ENCODE measurements at regions of chr7 and their contacts with region 1.

Region 1: GRCh38 chr7:139075031-139075652 is 34.4 kb downstream of the ZC3HAV1 start:
- DNase-seq: peak; percentile 84
- H3K4me3 ChIP-seq: peak overlapping the region in 1 of 2 experiments; percentile 2; a peak in 1 of 4 replicates
- H3K27ac ChIP-seq: peak overlapping the region; percentile 23 to 52; a peak in 2 of 4 replicates
- H3K4me1 ChIP-seq: peaks cover 0 to 3% of the 10 kb centered on the region in 2 experiments; a peak in 2 of 4 replicates
- H3K27me3 ChIP-seq: no peaks in the 10 kb centered on the region
- CTCF ChIP-seq: peak; percentile 99
- EP300 ChIP-seq: no peak
- RAD21 ChIP-seq: peak; percentile 97

Region 2: DNA sequence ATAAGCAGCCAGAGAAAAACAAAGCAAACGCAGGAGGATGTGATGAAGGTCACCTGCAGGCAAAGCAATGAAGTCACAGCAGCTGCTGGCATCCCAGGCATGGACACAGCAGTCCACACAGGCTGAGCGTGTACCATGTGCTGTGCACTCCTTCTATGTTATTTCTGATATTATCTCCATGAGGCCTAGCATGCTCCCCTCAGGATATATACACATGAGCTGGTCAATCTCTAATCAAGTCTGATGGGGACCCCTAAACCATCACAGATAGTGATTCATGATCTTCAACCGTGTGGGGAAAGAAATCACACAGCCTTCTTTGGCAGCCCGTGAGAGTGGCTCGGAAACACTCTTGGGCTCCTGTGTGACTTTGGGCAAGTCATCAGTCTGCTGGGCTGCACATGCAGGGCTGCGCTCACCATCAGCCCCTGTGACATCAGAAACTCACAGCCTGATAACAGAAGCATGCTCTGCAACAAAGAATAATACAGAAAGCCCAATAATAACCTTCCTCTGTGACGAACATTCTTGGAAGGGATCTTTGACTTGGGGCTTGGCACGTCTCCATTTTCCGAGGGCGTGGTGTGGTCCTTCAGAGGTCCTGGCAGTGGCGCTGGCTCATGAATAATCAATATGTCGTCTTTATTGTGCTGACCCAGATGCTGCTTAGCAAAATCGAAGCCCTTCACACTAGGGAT is 194.1 kb before region 1 on chr7:
- CTCF ChIA-PET with region 1: interaction called, 48 read pairs
- POLR2A ChIA-PET with region 1: no interaction called
- DNase-seq: peak; percentile 69
- H3K4me3 ChIP-seq: no peak overlapping the region
- H3K27ac ChIP-seq: no peak overlapping the region; a peak in 1 of 4 replicates
- H3K4me1 ChIP-seq: peaks cover 0 to 11% of the 10 kb centered on the region in 2 experiments; a peak in 2 of 4 replicates
- H3K27me3 ChIP-seq: no peaks in the 10 kb centered on the region
- CTCF ChIP-seq: no peak
- EP300 ChIP-seq: peak in 1 of 2 experiments; percentile 32; a peak in 1 of 4 replicates
- RAD21 ChIP-seq: no peak

Region 3: DNA sequence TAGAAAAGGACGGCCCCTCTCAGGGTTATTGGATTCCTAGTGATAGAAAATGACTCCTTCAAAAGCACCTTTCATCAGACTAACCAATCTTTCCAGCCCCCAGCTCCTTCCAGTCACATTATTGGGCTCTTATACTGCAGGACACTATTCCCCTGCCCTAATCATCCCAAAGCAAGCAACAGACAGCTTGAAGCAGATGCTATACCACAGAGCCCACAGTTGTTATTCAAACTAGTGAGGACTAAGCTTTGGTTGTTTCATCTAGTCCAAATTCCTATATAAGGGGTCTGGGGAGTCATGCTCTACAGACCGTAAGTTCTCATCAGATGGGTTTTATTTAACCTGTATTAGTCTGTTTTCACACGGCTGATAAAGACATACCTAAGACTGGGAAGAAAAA is 63.8 kb before region 1 on chr7:
- CTCF ChIA-PET with region 1: interaction called, 140 read pairs
- POLR2A ChIA-PET with region 1: no interaction called
- DNase-seq: no peak
- H3K4me3 ChIP-seq: no peak overlapping the region
- H3K27ac ChIP-seq: no peak overlapping the region
- H3K4me1 ChIP-seq: no peaks in the 10 kb centered on the region
- H3K27me3 ChIP-seq: 0 out of 2 replicates have a peak, but pooled peaks cover 4% of the 10 kb centered on the region
- CTCF ChIP-seq: no peak
- EP300 ChIP-seq: no peak
- RAD21 ChIP-seq: no peak

Region 4: GRCh38 chr7:139026551-139026950 is 48.6 kb before region 1 on chr7:
- CTCF ChIA-PET with region 1: interaction called, 140 read pairs
- POLR2A ChIA-PET with region 1: no interaction called
- DNase-seq: no peak
- H3K4me3 ChIP-seq: no peak overlapping the region
- H3K27ac ChIP-seq: no peak overlapping the region
- H3K4me1 ChIP-seq: peaks cover 0 to 3% of the 10 kb centered on the region in 2 experiments; a peak in 2 of 4 replicates
- H3K27me3 ChIP-seq: no peaks in the 10 kb centered on the region
- CTCF ChIP-seq: no peak
- EP300 ChIP-seq: no peak
- RAD21 ChIP-seq: no peak

Region 5: GRCh38 chr7:139043823-139044812 is 31.0 kb before region 1 on chr7:
- CTCF ChIA-PET with region 1: interaction called, 52 read pairs
- POLR2A ChIA-PET with region 1: no interaction called
- DNase-seq: no peak
- H3K4me3 ChIP-seq: no peak overlapping the region
- H3K27ac ChIP-seq: no peak overlapping the region
- H3K4me1 ChIP-seq: no peaks in the 10 kb centered on the region
- H3K27me3 ChIP-seq: no peaks in the 10 kb centered on the region
- CTCF ChIP-seq: no peak
- EP300 ChIP-seq: no peak
- RAD21 ChIP-seq: no peak

Region 6: DNA sequence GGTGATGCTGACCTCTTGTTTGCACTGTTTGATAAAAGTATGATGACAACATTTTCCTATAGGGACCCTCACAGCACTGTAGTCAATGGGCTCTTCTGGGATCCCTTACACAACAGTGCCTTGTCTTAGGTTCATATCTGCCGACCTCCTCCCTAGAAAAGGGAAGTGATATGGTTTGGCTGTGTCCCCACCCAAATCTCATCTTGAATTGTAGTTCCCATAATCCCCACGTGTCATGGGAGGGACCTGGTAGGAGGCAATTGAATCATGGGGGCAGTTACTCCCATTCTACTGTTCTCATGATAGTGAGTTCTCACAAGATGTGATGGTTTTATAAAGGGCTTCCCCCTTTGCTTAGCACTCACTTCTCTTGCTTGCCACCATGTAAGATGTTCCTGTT is 11.3 kb after region 1 on chr7:
- CTCF ChIA-PET with region 1: interaction called, 46 read pairs
- POLR2A ChIA-PET with region 1: no interaction called
- DNase-seq: no peak
- H3K4me3 ChIP-seq: no peak overlapping the region
- H3K27ac ChIP-seq: no peak overlapping the region
- H3K4me1 ChIP-seq: no peaks in the 10 kb centered on the region
- H3K27me3 ChIP-seq: no peaks in the 10 kb centered on the region
- CTCF ChIP-seq: no peak
- EP300 ChIP-seq: no peak
- RAD21 ChIP-seq: no peak

Measured in SK-N-SH (cell line).